HCT116 (cell line): ENCODE measurements at regions of chrX and their contacts with region 1.

Region 1: GRCh38 chrX:80316526-80316925 is 103.7 kb upstream of the TENT5D start:
- DNase-seq: no peak
- ATAC-seq: no peak
- H3K4me3 ChIP-seq: no peak overlapping the region
- H3K27ac ChIP-seq: no peak overlapping the region
- H3K4me1 ChIP-seq: no peaks in the 10 kb centered on the region
- H3K27me3 ChIP-seq: no peaks in the 10 kb centered on the region
- CTCF ChIP-seq: no peak
- POLR2A ChIP-seq: no peak
- RAD21 ChIP-seq: no peak

Region 2: DNA sequence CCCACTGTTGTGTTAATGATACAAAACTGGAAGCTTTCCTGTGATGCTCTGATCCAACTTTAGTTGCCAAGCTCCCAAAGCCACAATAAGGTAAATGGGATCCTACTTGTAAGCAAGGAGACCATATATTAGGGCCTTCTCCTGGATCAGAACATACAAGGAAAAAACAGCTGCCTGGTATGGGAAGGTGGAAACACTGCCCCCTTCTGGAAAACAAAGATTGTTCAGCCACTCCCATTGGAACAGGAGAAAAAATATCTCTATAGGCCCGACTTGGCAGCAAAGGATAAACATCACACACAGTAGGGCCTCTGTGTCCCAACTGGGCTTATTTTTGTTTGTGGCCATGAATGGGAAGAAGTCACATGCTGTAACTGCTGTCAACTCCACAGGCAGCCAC is 135.4 kb before region 1 on chrX:
- CTCF ChIA-PET with region 1: no interaction called
- POLR2A ChIA-PET with region 1: no interaction called
- RAD21 ChIA-PET with region 1: no interaction called
- intact Hi-C with region 1: no loop called
- DNase-seq: no peak
- ATAC-seq: no peak
- H3K4me3 ChIP-seq: no peak overlapping the region
- H3K27ac ChIP-seq: no peak overlapping the region
- H3K4me1 ChIP-seq: no peaks in the 10 kb centered on the region
- H3K27me3 ChIP-seq: no peaks in the 10 kb centered on the region
- CTCF ChIP-seq: no peak
- POLR2A ChIP-seq: no peak
- RAD21 ChIP-seq: no peak

Region 3: DNA sequence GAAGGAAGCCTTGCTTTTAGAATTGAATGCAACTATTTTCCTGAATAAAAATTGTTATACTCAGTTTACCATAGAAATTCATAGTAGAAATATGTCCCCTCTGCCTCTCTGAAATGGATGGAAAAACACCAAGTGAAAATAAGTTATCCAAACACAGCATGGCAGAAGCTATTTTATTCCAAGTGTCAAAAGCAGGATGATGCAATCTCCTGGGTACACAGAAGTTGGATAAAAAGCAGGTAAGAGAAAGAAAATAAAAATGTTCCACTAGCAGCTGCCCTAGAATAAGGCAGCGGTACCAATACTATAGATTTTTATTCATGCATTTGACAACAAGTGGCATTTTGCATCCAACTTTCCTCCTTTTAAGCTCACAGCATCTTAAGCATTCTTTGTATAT is 14.8 kb after region 1 on chrX:
- CTCF ChIA-PET with region 1: no interaction called
- POLR2A ChIA-PET with region 1: no interaction called
- RAD21 ChIA-PET with region 1: no interaction called
- intact Hi-C with region 1: no loop called
- DNase-seq: no peak
- ATAC-seq: no peak
- H3K4me3 ChIP-seq: no peak overlapping the region
- H3K27ac ChIP-seq: no peak overlapping the region
- H3K4me1 ChIP-seq: no peaks in the 10 kb centered on the region
- H3K27me3 ChIP-seq: no peaks in the 10 kb centered on the region
- CTCF ChIP-seq: no peak
- POLR2A ChIP-seq: no peak
- RAD21 ChIP-seq: no peak

Region 4: GRCh38 chrX:80556148-80556547 is 239.6 kb after region 1 on chrX:
- CTCF ChIA-PET with region 1: no interaction called
- POLR2A ChIA-PET with region 1: no interaction called
- RAD21 ChIA-PET with region 1: no interaction called
- intact Hi-C with region 1: loop called (anchors 5 kb)
- DNase-seq: no peak
- ATAC-seq: no peak
- H3K4me3 ChIP-seq: no peak overlapping the region
- H3K27ac ChIP-seq: no peak overlapping the region
- H3K4me1 ChIP-seq: no peaks in the 10 kb centered on the region
- H3K27me3 ChIP-seq: no peaks in the 10 kb centered on the region
- CTCF ChIP-seq: no peak
- POLR2A ChIP-seq: no peak
- RAD21 ChIP-seq: no peak

Region 5: GRCh38 chrX:81082649-81083048 is 766.1 kb after region 1 on chrX:
- CTCF ChIA-PET with region 1: no interaction called
- POLR2A ChIA-PET with region 1: no interaction called
- RAD21 ChIA-PET with region 1: no interaction called
- intact Hi-C with region 1: no loop called
- DNase-seq: no peak
- ATAC-seq: no peak
- H3K4me3 ChIP-seq: no peak overlapping the region
- H3K27ac ChIP-seq: no peak overlapping the region
- H3K4me1 ChIP-seq: no peaks in the 10 kb centered on the region
- H3K27me3 ChIP-seq: no peaks in the 10 kb centered on the region
- CTCF ChIP-seq: no peak
- POLR2A ChIP-seq: no peak
- RAD21 ChIP-seq: no peak